ENCODE measurements at regions of chr4 and their contacts with region 1.

Region 1: DNA sequence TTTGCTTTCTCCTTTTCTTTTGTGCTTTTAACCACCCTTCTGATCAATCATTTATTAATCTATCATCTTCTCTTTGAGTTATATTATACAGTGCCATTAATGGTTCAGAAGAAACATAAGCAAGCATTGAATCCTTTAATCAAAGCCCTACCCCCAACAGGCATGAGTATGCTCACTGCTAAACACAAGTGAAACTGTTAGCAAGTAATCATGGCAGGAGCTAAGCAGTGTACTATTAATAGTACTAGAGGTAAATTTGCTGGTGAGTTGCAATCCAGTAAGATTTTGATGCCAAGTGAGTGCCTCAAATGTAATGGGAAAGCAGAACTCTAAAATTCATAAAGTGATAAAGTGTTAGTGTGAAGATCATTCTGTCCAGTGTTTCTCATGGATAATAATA is 57.2 kb downstream of the FNIP2 start:
- DNase-seq: no peak
- ATAC-seq: peak; percentile 59
- H3K4me3 Mint-ChIP-seq: no peak overlapping the region
- H3K27ac Mint-ChIP-seq: peak overlapping the region; percentile 22
- H3K4me1 Mint-ChIP-seq: peaks cover 65% of the 10 kb centered on the region
- H3K27me3 Mint-ChIP-seq: no peaks in the 10 kb centered on the region

Region 2: GRCh38 chr4:158837527-158838141 is 11.6 kb after region 1 on chr4:
- CTCF ChIA-PET with region 1: interaction called, 12 read pairs
- DNase-seq: no peak
- ATAC-seq: no peak
- H3K4me3 Mint-ChIP-seq: no peak overlapping the region
- H3K27ac Mint-ChIP-seq: no peak overlapping the region
- H3K4me1 Mint-ChIP-seq: peaks cover 4% of the 10 kb centered on the region
- H3K27me3 Mint-ChIP-seq: no peaks in the 10 kb centered on the region

Region 3: DNA sequence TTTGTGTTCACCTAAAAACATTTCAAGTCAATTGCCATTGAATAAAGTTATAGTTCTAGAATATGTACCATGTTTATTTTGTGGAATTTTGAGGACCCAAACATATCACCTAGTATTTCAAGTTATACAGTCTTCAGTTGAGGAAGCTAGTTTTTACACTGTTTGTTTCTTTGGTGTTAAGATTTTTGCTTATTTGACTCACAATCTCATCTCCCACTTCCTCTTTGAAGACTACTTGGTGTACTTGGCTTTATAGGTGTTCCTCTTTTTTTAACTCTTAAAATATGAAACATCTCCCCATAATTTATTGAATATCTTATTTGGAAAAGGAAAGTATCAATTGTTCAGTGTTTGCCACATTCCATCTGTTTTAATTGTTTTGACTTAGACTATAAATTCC is 952.2 kb after region 1 on chr4:
- CTCF ChIA-PET with region 1: no interaction called
- DNase-seq: no peak
- ATAC-seq: no peak
- H3K4me3 Mint-ChIP-seq: no peak overlapping the region
- H3K27ac Mint-ChIP-seq: no peak overlapping the region
- H3K4me1 Mint-ChIP-seq: no peaks in the 10 kb centered on the region
- H3K27me3 Mint-ChIP-seq: no peaks in the 10 kb centered on the region